Activated T-helper 1 cell treated with anti-CD3 and anti-CD28 coated beads, Interleukin-12 subunit alpha, Interleukin-12 subunit beta, Interleukin-2, Interleukin-4 antibody, amounts not matched to agents 30 ng/mL and 10 ng/mL and 1 ng/mL, durations not matched to agents 14 hours and 24 hours and 36 hours (primary cell): ENCODE measurements at regions of chr16 and their contacts with region 1.

Region 1: DNA sequence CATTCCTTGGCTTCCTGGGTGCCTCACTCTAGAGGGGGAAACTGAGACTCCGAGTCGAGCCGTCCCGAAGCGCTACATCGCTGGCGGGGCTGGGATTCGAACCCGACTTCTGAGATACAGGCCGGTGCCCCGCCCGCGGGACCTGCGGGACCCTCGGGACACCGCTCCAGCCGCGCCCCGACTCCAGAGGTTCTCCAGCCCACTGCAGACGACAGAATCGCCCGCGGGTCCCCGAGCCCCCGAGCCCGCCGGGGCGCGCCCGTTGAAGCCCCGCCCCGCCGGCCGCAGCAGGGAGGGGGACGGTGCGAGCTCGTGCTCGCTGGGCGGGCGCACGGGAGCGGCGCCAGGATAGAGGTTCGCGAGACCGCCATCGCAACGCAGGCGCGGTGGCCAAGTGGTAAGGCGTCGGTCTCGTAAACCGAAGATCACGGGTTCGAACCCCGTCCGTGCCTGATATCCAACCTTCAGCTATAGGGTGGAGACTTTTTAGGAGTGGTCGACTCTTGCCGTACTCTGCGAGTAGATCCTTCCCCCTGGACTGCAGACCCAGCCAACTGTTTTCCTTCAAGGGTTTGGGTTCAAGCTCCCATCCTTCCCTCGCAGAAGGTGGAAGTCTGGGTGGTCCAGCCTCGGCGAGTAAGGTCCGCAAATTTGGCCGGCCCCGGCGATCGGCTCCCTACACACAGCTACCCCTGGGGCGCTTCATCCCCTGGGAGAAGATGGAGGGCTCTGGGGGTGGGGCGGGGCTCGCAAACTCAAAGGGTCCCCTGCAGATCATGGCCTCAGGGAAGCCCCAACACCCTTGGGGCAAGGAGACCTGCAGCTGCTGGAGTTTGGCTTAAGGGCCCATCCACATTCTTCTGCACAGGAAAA is 214.6 kb downstream of the MRTFB start:
- DNase-seq: peak; percentile 91
- H3K4me3 Mint-ChIP-seq: peak overlapping the region; percentile 89
- H3K27ac Mint-ChIP-seq: peak overlapping the region; percentile 77
- H3K4me1 Mint-ChIP-seq: peaks cover 20% of the 10 kb centered on the region
- H3K27me3 Mint-ChIP-seq: peaks cover 6% of the 10 kb centered on the region

Region 2: GRCh38 chr16:14070877-14071575 is 214.7 kb before region 1 on chr16 and contains the start of gene MRTFB:
- intact Hi-C with region 1: loop called (anchors 1 kb)
- DNase-seq: peak; percentile 77
- H3K4me3 Mint-ChIP-seq: peak within 1 kb of the TSS; percentile 86
- H3K27ac Mint-ChIP-seq: peak within 1 kb of the TSS; percentile 74
- H3K4me1 Mint-ChIP-seq: peaks cover 16% of the 10 kb centered on the region
- H3K27me3 Mint-ChIP-seq: no peaks in the 10 kb centered on the region
- total RNA-seq, gene MRTFB: 10.4 and 13.5 TPM in 2 replicates

Region 3: DNA sequence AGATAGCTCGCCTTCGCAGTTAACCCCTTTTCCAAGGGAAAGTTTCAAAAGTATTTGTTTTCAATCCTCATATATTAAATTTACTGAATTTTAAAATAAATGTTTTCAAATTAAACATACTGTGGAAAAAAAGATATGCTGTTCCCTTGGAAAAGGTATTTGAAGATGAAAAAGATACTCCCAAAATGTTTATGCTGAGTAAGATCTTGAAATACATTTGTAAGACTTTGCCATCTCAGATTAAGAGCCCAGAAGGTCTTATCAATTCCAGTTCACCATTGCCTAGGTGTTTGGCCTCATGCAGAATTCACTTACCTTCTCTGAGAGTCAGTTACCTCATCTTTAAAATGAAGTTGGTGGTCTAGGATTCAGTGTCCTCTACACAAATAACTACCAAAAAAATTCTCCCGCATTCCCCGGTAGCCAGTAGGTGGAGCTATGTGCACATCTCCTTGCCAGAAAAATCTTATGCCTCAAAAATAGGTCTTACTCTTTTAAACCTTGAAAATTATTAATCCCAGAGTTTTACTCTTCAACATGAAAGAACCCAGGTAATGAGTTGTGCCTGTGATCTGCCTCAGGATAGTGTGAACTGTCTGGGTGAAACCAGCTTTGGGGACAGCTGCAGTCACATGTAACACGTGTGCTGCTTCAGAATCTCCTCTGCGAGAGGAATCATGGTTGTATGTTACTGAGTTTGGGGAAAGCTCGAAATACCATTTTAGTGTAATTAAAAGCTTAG is 36.3 kb before region 1 on chr16:
- intact Hi-C with region 1: loop called (anchors 5 kb)
- DNase-seq: peak; percentile 19
- H3K4me3 Mint-ChIP-seq: no peak overlapping the region
- H3K27ac Mint-ChIP-seq: no peak overlapping the region
- H3K4me1 Mint-ChIP-seq: no peaks in the 10 kb centered on the region
- H3K27me3 Mint-ChIP-seq: no peaks in the 10 kb centered on the region

Region 4: GRCh38 chr16:14354551-14355351 is 69.0 kb after region 1 on chr16:
- intact Hi-C with region 1: loop called (anchors 1 kb)
- DNase-seq: peak; percentile 24
- H3K4me3 Mint-ChIP-seq: peak overlapping the region; percentile 8
- H3K27ac Mint-ChIP-seq: no peak overlapping the region
- H3K4me1 Mint-ChIP-seq: peaks cover 10% of the 10 kb centered on the region
- H3K27me3 Mint-ChIP-seq: peaks cover 21% of the 10 kb centered on the region

Region 5: DNA sequence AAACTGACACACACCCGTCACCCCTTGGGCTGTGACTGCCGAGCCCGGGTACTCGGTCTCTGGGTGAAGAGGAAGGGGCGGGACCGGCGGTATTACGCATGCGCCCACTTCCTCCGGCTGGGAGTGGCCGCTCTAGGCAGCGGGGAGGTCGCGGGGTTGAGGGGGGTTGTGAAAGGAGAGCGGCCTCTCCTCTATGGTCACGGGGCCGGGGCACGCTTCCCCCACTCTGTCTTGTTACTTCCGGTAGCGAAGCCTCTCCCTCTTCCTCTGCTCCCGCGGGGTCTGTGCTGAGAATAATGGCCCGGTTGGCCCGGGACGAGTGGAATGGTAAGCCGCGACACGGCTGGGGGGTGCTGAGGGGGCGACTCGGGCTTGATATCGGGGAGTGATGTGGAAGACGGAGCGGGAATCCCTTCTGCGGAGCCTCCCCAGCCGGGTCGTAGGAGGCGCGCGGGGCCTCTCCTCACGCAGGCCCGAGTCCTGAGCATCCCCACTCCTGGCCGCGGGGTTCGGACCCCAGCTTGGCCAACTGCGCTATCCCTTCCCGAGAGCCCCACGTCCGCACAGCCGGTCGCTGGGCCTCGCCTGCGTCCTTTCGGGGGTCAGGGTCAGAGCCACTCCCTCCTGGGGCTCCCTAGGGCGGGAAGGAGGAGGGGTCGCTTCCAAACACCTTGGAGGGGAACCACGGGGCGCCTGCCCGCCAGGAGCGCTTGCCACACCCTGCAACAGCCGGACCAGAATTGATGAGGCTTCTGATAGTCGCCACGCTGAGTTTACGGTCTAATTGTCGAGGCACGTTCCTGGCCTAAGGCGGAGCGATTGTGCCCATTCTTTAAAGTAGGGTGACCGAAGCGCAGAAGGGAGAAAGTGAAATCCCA is 347.2 kb after region 1 on chr16 and contains the start of gene BFAR:
- intact Hi-C with region 1: loop called (anchors 1 kb)
- DNase-seq: peak; percentile 99
- H3K4me3 Mint-ChIP-seq: peak within 1 kb of the TSS; percentile 100
- H3K27ac Mint-ChIP-seq: peak within 1 kb of the TSS; percentile 100
- H3K4me1 Mint-ChIP-seq: peaks cover 60% of the 10 kb centered on the region
- H3K27me3 Mint-ChIP-seq: no peaks in the 10 kb centered on the region
- total RNA-seq, gene BFAR: 59.8 and 64.8 TPM in 2 replicates